ENCODE measurements at regions of chr17 and their contacts with region 1.

Region 1: GRCh38 chr17:81871387-81872230 is 472 bp upstream of the ARHGDIA start:
- DNase-seq: peak; percentile 98
- H3K4me3 ChIP-seq: peak overlapping the region; percentile 71 to 99 (median 84)
- H3K27ac ChIP-seq: peak overlapping the region; percentile 98 to 100 (median 99)
- H3K4me1 ChIP-seq: peaks cover 0 to 58% (median 50%) of the 10 kb centered on the region in 4 donors
- H3K27me3 ChIP-seq: no peaks in the 10 kb centered on the region
- CTCF ChIP-seq: no peak
- EP300 ChIP-seq: no peak
- POLR2A ChIP-seq: peak; percentile 89 to 91

Region 2: GRCh38 chr17:81833160-81833920 is 38.3 kb before region 1 on chr17 and contains the start of gene MCRIP1:
- intact Hi-C with region 1: loop called (anchors 5 kb)
- DNase-seq: peak; percentile 98
- H3K4me3 ChIP-seq: peak within 1 kb of the TSS; percentile 82 to 99 (median 92)
- H3K27ac ChIP-seq: peak within 1 kb of the TSS; percentile 90 to 95 (median 93)
- H3K4me1 ChIP-seq: peaks cover 0 to 31% (median 25%) of the 10 kb centered on the region in 4 donors
- H3K27me3 ChIP-seq: no peaks in the 10 kb centered on the region
- CTCF ChIP-seq: no peak
- EP300 ChIP-seq: no peak
- POLR2A ChIP-seq: peak; percentile 87 to 92
- total RNA-seq, gene MCRIP1: 116 to 129 (median 122) TPM

Region 3: GRCh38 chr17:81890447-81891299 is 19.1 kb after region 1 on chr17:
- intact Hi-C with region 1: loop called (anchors 2 kb)
- DNase-seq: peak; percentile 62
- H3K4me3 ChIP-seq: peak overlapping the region; percentile 77 to 99 (median 90)
- H3K27ac ChIP-seq: peak overlapping the region; percentile 89 to 97 (median 94)
- H3K4me1 ChIP-seq: peaks cover 0 to 32% (median 26%) of the 10 kb centered on the region in 4 donors
- H3K27me3 ChIP-seq: no peaks in the 10 kb centered on the region
- CTCF ChIP-seq: no peak
- EP300 ChIP-seq: no peak
- POLR2A ChIP-seq: no peak

Region 4: DNA sequence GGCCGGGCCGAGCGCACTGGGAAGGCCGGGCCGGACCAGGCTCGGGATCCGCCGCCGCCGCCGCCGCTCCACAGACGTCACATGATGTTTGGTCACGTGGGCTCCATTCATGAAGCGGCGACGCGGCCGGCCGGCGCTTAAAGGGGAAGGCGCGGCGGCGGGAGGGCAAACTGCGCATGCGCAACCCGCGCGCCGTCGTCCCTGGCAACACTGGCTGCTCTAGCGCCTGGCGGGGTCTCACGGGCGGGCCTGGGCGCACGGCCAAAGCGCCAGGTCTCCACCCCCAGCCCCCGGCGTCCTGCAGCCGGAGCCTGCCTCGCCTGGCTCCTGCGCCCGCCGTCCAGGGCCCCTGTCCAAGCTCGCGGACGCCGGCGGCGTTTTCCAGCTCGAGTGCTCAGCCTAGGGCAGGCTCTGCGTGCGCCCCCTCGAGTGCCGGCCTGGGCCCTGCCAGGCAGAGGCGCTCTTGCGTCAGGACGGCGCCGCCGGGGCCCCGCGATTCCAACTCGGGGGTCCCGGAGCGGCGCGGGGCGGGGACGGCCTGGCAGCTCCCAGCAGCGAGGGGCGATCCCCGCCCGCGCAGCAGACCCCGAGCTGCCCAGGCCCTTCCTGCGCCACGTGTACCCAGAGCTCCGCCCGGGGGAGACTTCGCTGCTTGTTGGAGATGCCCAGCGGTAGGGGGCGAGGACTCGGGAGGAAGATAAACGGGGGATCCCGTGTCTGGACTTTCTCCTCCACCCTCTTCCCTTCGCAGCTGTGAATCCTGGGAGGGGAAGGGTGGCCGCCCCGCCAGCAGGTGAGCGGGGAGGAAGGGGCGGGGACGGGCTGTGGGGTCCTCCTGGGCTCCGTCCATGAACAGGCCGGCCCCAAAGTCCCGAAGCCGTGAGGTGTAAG is 56.3 kb after region 1 on chr17 and contains the start of gene MAFG:
- intact Hi-C with region 1: loop called (anchors 2 kb)
- DNase-seq: peak; percentile 96
- H3K4me3 ChIP-seq: peak within 1 kb of the TSS; percentile 85 to 99 (median 92)
- H3K27ac ChIP-seq: peak within 1 kb of the TSS; percentile 98 to 99 (median 99)
- H3K4me1 ChIP-seq: peaks cover 0 to 50% (median 47%) of the 10 kb centered on the region in 4 donors
- H3K27me3 ChIP-seq: peaks cover 0 to 13% (median 0%) of the 10 kb centered on the region in 3 donors
- CTCF ChIP-seq: no peak
- EP300 ChIP-seq: peak in 1 of 4 donors; percentile 38
- POLR2A ChIP-seq: no peak
- total RNA-seq, gene MAFG: 16.4 to 21.9 (median 17.0) TPM

Region 5: GRCh38 chr17:82098072-82098821 is 226.6 kb after region 1 on chr17 and contains the start of gene FASN:
- intact Hi-C with region 1: loop called (anchors 5 kb)
- DNase-seq: peak; percentile 95
- H3K4me3 ChIP-seq: peak within 1 kb of the TSS; percentile 59 to 94 (median 65)
- H3K27ac ChIP-seq: peak within 1 kb of the TSS; percentile 88 to 98 (median 94)
- H3K4me1 ChIP-seq: peaks cover 0 to 49% (median 38%) of the 10 kb centered on the region in 4 donors
- H3K27me3 ChIP-seq: no peaks in the 10 kb centered on the region
- CTCF ChIP-seq: peak in 1 of 4 experiments; percentile 31
- EP300 ChIP-seq: no peak
- POLR2A ChIP-seq: peak; percentile 28 to 38
- total RNA-seq, gene FASN: 12.7 to 44.2 (median 19.0) TPM